Activated CD4-positive, alpha-beta T cell treated with anti-CD3 and anti-CD28 coated beads for 36 hours (primary cell): ENCODE measurements at regions of chr1 and their contacts with region 1.

Region 1: GRCh38 chr1:156910309-156910782 is 10.1 kb upstream of the LRRC71 start:
- DNase-seq: peak; percentile 81
- ATAC-seq: peak; percentile 65
- H3K4me3 Mint-ChIP-seq: no peak overlapping the region
- H3K27ac Mint-ChIP-seq: no peak overlapping the region
- H3K4me1 Mint-ChIP-seq: no peaks in the 10 kb centered on the region
- H3K27me3 Mint-ChIP-seq: peaks cover 1% of the 10 kb centered on the region

Region 2: DNA sequence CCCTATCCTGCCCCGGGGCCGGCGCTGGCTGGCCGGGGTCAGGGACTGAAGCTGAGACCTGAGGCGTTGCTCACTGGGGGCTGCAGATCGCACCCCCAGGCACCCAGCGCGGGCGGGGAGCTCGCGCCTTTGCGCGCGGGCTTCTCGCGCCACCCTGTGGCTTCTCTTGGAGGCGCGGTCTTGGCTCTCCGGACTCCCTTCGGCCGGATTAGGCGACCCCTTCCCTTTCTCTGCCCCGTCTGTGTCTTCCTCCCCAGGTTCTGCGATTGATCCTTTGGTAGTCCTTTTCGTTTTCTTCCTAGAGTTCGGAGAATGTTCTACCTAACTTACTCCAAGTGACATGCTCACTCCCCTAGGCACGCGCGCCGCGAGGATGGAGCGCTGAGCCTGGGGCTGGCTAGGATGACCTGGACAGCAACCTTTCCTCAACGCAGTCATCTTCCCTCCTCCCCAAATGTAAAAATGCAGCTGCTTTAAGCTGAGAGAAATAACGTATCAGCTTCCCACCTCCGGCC is 50.2 kb before region 1 on chr1:
- CTCF ChIA-PET with region 1: interaction called, 15 read pairs
- POLR2A ChIA-PET with region 1: no interaction called
- intact Hi-C with region 1: no loop called
- DNase-seq: peak; percentile 77
- ATAC-seq: peak; percentile 47
- H3K4me3 Mint-ChIP-seq: peak overlapping the region; percentile 56
- H3K27ac Mint-ChIP-seq: no peak overlapping the region
- H3K4me1 Mint-ChIP-seq: peaks cover 25% of the 10 kb centered on the region
- H3K27me3 Mint-ChIP-seq: peaks cover 45% of the 10 kb centered on the region

Region 3: GRCh38 chr1:156927215-156928042 is 17.1 kb after region 1 on chr1:
- CTCF ChIA-PET with region 1: interaction called, 44 read pairs
- POLR2A ChIA-PET with region 1: no interaction called
- intact Hi-C with region 1: loop called in 1 of 2 experiments (anchors 1 kb)
- DNase-seq: peak; percentile 87
- ATAC-seq: peak; percentile 76
- H3K4me3 Mint-ChIP-seq: no peak overlapping the region
- H3K27ac Mint-ChIP-seq: no peak overlapping the region
- H3K4me1 Mint-ChIP-seq: peaks cover 25% of the 10 kb centered on the region
- H3K27me3 Mint-ChIP-seq: peaks cover 64% of the 10 kb centered on the region

Region 4: GRCh38 chr1:157019457-157019856 is 109.1 kb after region 1 on chr1:
- CTCF ChIA-PET with region 1: no interaction called
- POLR2A ChIA-PET with region 1: no interaction called
- intact Hi-C with region 1: no loop called
- DNase-seq: no peak
- ATAC-seq: no peak
- H3K4me3 Mint-ChIP-seq: no peak overlapping the region
- H3K27ac Mint-ChIP-seq: no peak overlapping the region
- H3K4me1 Mint-ChIP-seq: no peaks in the 10 kb centered on the region
- H3K27me3 Mint-ChIP-seq: peaks cover 25% of the 10 kb centered on the region

Region 5: GRCh38 chr1:157073944-157074767 is 163.8 kb after region 1 on chr1:
- CTCF ChIA-PET with region 1: no interaction called
- POLR2A ChIA-PET with region 1: no interaction called
- intact Hi-C with region 1: loop called in 1 of 2 experiments (anchors 1 kb)
- DNase-seq: peak; percentile 68
- ATAC-seq: no peak
- H3K4me3 Mint-ChIP-seq: no peak overlapping the region
- H3K27ac Mint-ChIP-seq: no peak overlapping the region
- H3K4me1 Mint-ChIP-seq: no peaks in the 10 kb centered on the region
- H3K27me3 Mint-ChIP-seq: peaks cover 18% of the 10 kb centered on the region

Region 6: DNA sequence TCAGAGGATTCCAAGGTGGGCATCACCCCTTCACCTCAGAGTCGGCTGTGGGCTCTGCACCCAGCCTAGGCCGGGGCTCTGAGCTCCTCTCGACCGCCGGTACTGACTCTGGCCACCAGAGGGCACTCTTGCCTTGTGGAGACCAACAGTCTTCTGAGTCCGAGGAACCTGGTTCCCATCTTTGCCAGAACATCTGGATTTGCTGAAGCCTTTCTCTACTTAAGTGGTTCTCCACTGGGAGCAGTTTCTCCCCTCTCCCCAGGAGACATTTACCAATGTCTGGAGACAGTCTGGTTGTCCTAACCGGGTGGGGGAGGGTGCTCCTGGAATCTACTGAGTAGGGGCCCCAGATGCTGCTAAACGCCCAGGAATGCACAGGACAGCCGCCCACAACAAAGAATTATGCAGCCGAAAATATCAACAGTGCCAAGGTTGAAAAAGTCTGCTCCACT is 179.9 kb after region 1 on chr1:
- CTCF ChIA-PET with region 1: no interaction called
- POLR2A ChIA-PET with region 1: no interaction called
- intact Hi-C with region 1: no loop called
- DNase-seq: peak; percentile 94
- ATAC-seq: peak; percentile 93
- H3K4me3 Mint-ChIP-seq: no peak overlapping the region
- H3K27ac Mint-ChIP-seq: no peak overlapping the region
- H3K4me1 Mint-ChIP-seq: no peaks in the 10 kb centered on the region
- H3K27me3 Mint-ChIP-seq: peaks cover 2% of the 10 kb centered on the region

Region 7: DNA sequence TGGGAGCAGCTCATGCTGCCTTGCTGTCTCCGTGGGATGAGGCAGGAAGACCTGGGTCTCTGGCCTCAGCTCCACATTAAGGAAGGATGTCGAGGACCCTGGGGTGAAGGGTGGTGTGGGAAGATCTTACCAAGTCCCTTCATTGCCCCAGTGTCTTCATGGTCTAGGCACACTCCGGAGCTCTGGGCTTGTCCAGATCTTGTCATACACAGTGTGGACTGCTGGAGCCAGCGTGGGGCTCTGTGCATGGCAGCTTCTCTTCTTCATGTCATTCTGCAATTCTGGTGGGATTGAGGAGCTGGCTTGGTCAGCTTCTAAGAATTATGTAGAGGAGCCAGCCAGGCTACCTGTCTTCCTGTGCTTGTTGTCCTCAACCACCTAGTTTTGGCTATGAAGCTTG is 307.1 kb after region 1 on chr1:
- CTCF ChIA-PET with region 1: no interaction called
- POLR2A ChIA-PET with region 1: no interaction called
- intact Hi-C with region 1: no loop called
- DNase-seq: no peak
- ATAC-seq: no peak
- H3K4me3 Mint-ChIP-seq: no peak overlapping the region
- H3K27ac Mint-ChIP-seq: no peak overlapping the region
- H3K4me1 Mint-ChIP-seq: no peaks in the 10 kb centered on the region
- H3K27me3 Mint-ChIP-seq: peaks cover 31% of the 10 kb centered on the region

Region 8: DNA sequence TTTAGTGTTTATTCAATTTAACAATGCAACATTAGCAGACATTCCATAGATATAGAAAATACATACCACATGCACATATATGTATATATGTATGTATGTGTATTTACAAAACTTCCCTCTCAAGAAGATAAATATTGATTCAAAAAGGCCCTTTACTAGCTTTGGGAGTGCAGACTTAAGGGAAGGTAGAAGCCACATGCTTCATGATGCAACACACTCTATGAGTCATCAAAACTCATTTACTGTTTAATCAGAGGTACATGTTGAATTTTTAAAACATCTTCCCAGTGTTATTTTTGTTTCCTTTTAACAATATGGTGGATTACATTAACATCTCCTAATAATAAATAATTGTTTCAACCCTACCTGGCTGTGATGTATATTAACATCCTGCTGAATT is 1021.7 kb after region 1 on chr1:
- CTCF ChIA-PET with region 1: no interaction called
- POLR2A ChIA-PET with region 1: no interaction called
- intact Hi-C with region 1: no loop called
- DNase-seq: no peak
- ATAC-seq: no peak
- H3K4me3 Mint-ChIP-seq: no peak overlapping the region
- H3K27ac Mint-ChIP-seq: no peak overlapping the region
- H3K4me1 Mint-ChIP-seq: no peaks in the 10 kb centered on the region
- H3K27me3 Mint-ChIP-seq: peaks cover 10% of the 10 kb centered on the region